Left colon (tissue), 2 donors: ENCODE measurements at regions of chr13 and their contacts with region 1.

Region 1: GRCh38 chr13:81017513-81018152 is 676.7 kb upstream of the SPRY2 start:
- DNase-seq: no peak
- ATAC-seq: peak; percentile 37

Region 2: GRCh38 chr13:80979035-80979641 is 38.5 kb before region 1 on chr13:
- intact Hi-C with region 1: loop called in 1 of 2 experiments (anchors 5 kb)
- DNase-seq: peak in 1 of 2 donors; percentile 15
- ATAC-seq: peak; percentile 61